ENCODE measurements at regions of chr18 and their contacts with region 1.

Region 1: DNA sequence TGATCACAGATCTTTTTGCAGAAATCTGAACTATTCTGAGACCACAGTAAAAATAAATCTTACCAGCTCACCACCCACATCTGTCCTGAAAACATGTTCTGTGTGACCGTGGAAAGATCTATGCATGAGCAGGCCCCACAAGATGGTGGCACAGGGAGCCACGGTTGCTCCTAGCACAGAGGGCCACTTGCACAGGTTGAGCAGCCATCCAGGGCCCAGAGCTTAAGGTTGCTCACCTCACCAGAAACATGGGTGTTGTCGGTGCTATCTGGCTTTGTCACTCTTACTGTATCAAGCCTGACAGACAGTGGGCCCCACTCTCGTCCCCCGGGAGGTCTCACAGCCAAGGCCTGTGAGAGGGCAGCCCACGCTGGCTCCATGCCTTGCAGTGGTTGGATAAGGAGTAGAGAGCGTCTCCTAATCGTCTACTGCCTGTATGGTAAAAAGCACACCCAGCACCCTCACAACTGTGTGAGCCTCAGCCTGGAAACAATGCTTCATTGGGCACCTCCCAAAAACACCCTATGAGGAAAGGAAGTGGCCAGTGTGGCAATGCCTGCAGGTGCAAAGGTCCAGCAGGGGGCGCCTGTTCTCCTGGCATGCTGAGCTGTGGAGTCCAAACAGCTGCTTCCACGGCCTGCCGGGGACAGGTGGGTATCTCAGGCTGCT is 19.6 kb downstream of the TUBB6 start:
- DNase-seq: peak; percentile 82
- CTCF ChIP-seq: peak; percentile 80

Region 2: GRCh38 chr18:12308386-12309100 is 19.1 kb before region 1 on chr18:
- CTCF ChIA-PET with region 1: interaction called, 81 read pairs
- POLR2A ChIA-PET with region 1: interaction called, 7 read pairs
- DNase-seq: peak; percentile 82
- CTCF ChIP-seq: no peak

Region 3: GRCh38 chr18:12347895-12348294 is 20.3 kb after region 1 on chr18:
- CTCF ChIA-PET with region 1: interaction called, 20 read pairs
- POLR2A ChIA-PET with region 1: interaction called, 3 read pairs
- DNase-seq: no peak
- CTCF ChIP-seq: no peak

Region 4: GRCh38 chr18:12361770-12362378 is 34.2 kb after region 1 on chr18:
- CTCF ChIA-PET with region 1: interaction called, 10 read pairs
- POLR2A ChIA-PET with region 1: no interaction called
- DNase-seq: no peak
- CTCF ChIP-seq: no peak

Region 5: GRCh38 chr18:12449051-12449785 is 121.6 kb after region 1 on chr18:
- CTCF ChIA-PET with region 1: no interaction called
- POLR2A ChIA-PET with region 1: no interaction called
- DNase-seq: no peak
- CTCF ChIP-seq: no peak

Region 6: GRCh38 chr18:12657684-12658425 is 330.2 kb after region 1 on chr18 and contains the start of gene SPIRE1:
- CTCF ChIA-PET with region 1: interaction called, 11 read pairs
- POLR2A ChIA-PET with region 1: no interaction called
- DNase-seq: peak; percentile 78
- CTCF ChIP-seq: no peak